AG04450 (cell line): ENCODE measurements at regions of chr2 and their contacts with region 1.

Region 1: DNA sequence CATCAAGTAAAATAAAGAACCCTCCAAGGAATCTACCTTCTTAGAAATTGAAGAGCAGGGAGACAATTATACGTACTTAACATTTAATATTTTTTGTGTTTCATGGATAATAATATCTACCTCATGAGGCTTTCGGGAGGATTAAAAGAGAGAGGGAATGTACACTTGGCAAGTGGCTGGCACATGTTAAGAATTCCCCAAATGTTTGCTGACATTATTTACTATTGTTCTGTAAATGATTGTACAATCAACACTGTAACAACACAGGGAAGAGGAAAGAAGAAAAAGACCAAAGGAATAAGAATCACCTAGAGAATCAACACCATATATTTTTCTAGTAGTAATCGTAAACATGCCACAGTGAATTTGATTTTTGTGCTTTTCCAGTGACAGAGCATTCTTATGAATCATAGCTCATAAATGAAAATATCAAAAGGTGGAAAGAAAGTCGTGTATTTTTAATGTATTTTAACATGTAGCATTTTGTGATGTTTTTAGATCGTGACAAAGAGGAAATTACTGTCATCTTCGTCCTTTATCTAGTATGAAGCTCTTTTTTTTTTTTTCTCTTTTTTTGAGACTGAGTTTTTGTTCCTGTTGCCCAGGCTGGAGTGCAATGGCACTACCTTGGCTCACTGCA is 67.3 kb downstream of the B3GNT2 start:
- DNase-seq: no peak
- H3K4me3 ChIP-seq: no peak overlapping the region
- H3K27ac ChIP-seq: no peak overlapping the region
- H3K27me3 ChIP-seq: no peaks in the 10 kb centered on the region
- CTCF ChIP-seq: no peak

Region 2: GRCh38 chr2:62065243-62065642 is 198.0 kb before region 1 on chr2:
- CTCF ChIA-PET with region 1: no interaction called
- POLR2A ChIA-PET with region 1: interaction called, 10 read pairs
- DNase-seq: no peak
- H3K4me3 ChIP-seq: no peak overlapping the region
- H3K27ac ChIP-seq: no peak overlapping the region
- H3K27me3 ChIP-seq: no peaks in the 10 kb centered on the region
- CTCF ChIP-seq: no peak